HCT116 (cell line): ENCODE measurements at regions of chr19 and their contacts with region 1.

Region 1: DNA sequence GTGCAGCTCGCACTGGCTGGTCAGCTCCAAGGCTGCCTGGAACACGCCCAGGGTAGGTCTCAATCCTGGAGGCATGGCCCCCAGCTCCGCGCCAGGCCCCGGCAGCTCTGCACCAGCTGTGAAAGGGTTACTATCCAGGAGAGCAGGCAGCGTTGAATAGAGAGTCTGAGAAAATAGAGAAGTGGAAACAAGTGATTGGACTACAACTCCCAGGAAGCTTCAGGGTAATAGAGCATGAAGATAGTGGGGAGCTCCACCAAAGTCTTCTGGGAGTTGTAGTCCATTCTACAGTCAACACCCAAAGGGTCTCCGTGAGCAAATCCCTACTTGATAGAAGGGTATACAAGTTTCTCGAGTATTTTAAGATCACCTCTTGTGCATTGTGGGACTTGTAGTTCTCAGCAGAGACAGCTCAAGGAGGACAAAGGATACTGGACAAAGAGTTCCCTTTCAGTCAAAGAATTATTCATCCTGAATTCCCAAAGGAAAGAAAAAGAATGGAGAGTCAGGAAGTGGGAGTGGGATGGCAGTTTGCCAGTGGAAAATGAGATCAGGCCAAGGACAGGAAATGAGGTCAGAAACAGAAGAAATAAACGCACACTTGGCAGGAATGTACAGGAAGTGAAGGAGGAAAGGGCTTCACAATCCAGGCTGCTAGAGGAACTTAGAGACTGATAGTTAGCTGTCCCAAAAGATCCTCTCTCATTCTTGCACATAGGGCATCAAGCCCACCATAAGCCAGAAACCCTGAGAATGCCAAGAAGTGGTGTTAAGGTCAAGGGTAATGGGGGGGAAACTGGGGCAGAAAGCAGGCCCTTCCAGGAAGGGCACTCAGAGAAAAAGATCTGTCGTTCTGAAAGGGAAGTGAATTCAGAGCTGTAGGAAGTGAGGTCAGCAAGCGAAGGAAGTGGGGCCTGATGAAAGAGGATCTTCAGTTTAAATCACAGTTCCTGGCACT is 5.5 kb upstream of the MAMSTR start:
- DNase-seq: peak; percentile 72
- ATAC-seq: peak; percentile 48
- H3K4me3 ChIP-seq: peak overlapping the region in 1 of 2 experiments; percentile 2; a peak in 2 of 4 replicates
- H3K27ac ChIP-seq: peak overlapping the region; percentile 58
- H3K4me1 ChIP-seq: peaks cover 6 to 32% of the 10 kb centered on the region in 2 experiments
- H3K27me3 ChIP-seq: no peaks in the 10 kb centered on the region
- CTCF ChIP-seq: no peak
- POLR2A ChIP-seq: peak; percentile 0
- RAD21 ChIP-seq: no peak

Region 2: GRCh38 chr19:48738557-48739399 is 13.7 kb after region 1 on chr19:
- CTCF ChIA-PET with region 1: interaction called, 8 read pairs
- POLR2A ChIA-PET with region 1: interaction called, 11 read pairs
- RAD21 ChIA-PET with region 1: no interaction called
- intact Hi-C with region 1: no loop called
- DNase-seq: peak; percentile 82
- ATAC-seq: peak; percentile 91
- H3K4me3 ChIP-seq: peak overlapping the region in 1 of 2 experiments; percentile 18; a peak in 1 of 4 replicates
- H3K27ac ChIP-seq: peak overlapping the region; percentile 53
- H3K4me1 ChIP-seq: peaks cover 25 to 40% of the 10 kb centered on the region in 2 experiments
- H3K27me3 ChIP-seq: no peaks in the 10 kb centered on the region
- CTCF ChIP-seq: peak in 2 of 3 experiments; percentile 34 to 60; a peak in 5 of 6 replicates
- POLR2A ChIP-seq: no peak
- RAD21 ChIP-seq: no peak; the same call in 1 of the 2 replicates